Ovary (tissue), 10 donors: ENCODE measurements at regions of chr3 and their contacts with region 1.

Region 1: GRCh38 chr3:187227658-187228258 is 30.5 kb downstream of the RTP1 start:
- DNase-seq: no peak
- H3K4me3 ChIP-seq: no peak overlapping the region
- H3K27ac ChIP-seq: no peak overlapping the region
- H3K4me1 ChIP-seq: no peaks in the 10 kb centered on the region
- H3K27me3 ChIP-seq: no peaks in the 10 kb centered on the region
- CTCF ChIP-seq: no peak
- EP300 ChIP-seq: no peak
- POLR2A ChIP-seq: no peak

Region 2: DNA sequence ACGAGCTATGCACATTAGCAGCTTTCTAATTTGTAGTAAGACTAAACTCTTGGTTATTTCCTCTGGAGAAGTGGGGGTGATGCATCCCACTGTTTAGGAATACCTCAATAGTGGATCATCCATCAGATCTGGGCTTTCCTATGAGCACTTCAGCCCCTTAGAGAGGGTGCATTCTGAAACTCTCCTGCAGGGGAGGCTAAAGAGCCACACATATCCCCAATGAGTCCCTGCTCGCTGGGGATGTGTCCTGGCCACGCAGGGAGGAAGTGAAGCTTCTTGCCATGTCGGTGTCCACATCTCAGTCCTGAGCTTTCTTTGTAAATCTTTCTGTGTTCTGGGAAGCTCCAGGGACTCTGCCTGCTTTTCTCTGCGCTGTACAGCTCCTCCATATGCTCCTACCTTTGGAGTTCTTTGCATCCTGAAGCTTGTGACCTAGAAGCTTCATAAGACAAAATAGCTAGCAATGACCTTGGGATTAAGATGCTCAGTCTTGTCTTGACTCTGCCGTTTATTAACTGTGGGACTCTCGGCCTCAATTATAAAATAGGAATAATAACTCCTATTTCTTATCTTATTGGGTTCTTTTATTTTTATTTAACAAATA is 92.0 kb after region 1 on chr3:
- intact Hi-C with region 1: loop called in 2 of 4 experiments (anchors 5 to 10 kb)
- DNase-seq: peak; percentile 45 to 73 (median 68)
- H3K4me3 ChIP-seq: no peak overlapping the region
- H3K27ac ChIP-seq: no peak overlapping the region
- H3K4me1 ChIP-seq: no peaks in the 10 kb centered on the region
- H3K27me3 ChIP-seq: no peaks in the 10 kb centered on the region
- CTCF ChIP-seq: peak; percentile 31 to 49 (median 46)
- EP300 ChIP-seq: no peak
- POLR2A ChIP-seq: no peak